ENCODE measurements at regions of chr11 and their contacts with region 1.

Region 1: DNA sequence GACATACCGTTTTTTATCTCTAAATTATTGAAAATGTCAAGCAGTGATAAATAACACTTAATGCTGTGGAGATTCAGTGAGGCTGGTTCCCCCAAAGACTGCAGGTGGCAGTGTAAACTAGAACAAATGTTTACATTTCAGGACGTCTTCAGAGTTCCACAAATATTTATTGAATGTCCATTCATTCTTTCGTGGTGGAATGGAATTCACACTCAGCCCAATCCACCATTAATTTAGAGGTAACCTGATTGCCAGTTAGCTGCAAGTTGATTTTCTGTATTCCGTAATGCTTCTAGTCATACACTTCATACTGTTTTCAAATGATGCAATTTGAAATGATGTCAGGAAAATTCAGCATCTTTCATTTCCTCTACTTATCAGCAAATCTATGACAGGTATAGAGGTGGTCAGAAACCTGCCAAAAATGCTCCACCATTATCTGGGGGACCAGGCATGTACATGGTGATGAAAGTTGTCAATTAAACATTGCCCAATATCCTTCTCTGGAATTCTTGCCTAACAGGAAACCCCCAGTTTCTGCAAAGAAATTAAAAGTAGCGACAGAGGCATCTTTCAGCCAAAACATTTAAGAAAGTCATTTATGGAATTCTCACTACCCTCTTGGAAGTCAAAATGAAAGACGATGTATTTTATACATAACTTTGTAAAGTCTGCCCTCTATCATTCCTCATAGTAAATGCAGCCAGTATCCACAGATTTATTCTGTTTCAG is 94.3 kb upstream of the BMAL1 start:
- DNase-seq: peak; percentile 29
- ATAC-seq: no peak
- H3K4me3 ChIP-seq: no peak overlapping the region
- H3K4me3 Mint-ChIP-seq: no peak overlapping the region
- H3K27ac ChIP-seq: no peak overlapping the region
- H3K27ac Mint-ChIP-seq: no peak overlapping the region
- H3K4me1 ChIP-seq: no peaks in the 10 kb centered on the region
- H3K4me1 Mint-ChIP-seq: no peaks in the 10 kb centered on the region
- H3K27me3 ChIP-seq: no peaks in the 10 kb centered on the region
- H3K27me3 Mint-ChIP-seq: peaks cover 8% of the 10 kb centered on the region
- CTCF ChIP-seq: peak; percentile 48

Region 2: DNA sequence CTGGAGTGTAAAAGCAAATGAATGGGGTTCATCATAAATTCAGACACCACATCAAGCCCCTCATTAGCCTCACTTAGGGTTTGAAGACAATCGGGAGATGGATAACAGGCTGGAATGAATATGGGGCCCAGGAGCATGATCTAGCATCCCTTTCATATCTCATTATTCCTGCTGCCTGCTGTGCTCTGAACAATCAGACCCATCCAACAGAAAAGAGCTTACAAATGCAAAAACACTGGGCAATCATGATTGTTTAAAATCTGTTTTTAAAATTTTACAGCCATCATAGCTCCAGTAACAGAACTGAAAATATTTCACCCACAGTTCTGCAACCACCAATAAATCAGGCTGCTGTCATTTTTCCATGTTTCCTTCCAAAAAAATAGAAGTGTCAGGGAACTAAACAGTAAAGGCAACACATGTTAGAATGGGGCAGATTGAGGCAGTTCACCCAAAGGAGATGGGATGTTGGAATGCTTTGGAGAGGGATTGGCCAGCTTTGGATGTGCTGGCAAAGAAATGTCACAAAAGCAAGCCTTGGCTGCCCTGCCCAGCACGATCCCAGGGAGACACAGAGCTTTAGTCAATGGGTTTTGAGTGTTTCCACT is 46.6 kb after region 1 on chr11:
- CTCF ChIA-PET with region 1: no interaction called
- POLR2A ChIA-PET with region 1: no interaction called
- intact Hi-C with region 1: no loop called
- DNase-seq: no peak
- ATAC-seq: no peak
- H3K4me3 ChIP-seq: no peak overlapping the region
- H3K4me3 Mint-ChIP-seq: peak overlapping the region; percentile 77
- H3K27ac ChIP-seq: no peak overlapping the region
- H3K27ac Mint-ChIP-seq: peak overlapping the region; percentile 52
- H3K4me1 ChIP-seq: peaks cover 26 to 27% of the 10 kb centered on the region in 2 donors
- H3K4me1 Mint-ChIP-seq: peaks cover 24% of the 10 kb centered on the region
- H3K27me3 ChIP-seq: no peaks in the 10 kb centered on the region
- H3K27me3 Mint-ChIP-seq: no peaks in the 10 kb centered on the region
- CTCF ChIP-seq: no peak

Region 3: DNA sequence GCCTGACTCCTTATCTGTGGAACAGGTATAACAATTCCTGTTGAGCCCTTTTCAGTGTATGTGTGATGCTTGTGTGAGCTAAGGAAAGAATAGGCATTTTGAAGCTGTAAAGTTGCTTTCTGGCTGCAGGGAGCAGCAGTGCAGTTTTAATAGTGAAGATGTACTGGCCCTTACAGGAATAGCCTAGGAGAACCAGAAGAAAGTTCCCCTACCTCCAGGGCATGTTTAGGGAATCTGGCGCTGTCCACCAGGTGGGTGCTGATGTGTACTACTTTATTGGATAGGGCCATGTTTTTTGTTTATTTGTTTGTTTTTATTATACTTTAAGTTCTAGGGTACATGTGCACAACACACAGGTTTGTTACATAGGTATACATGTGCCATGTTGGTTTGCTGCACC is 105.8 kb after region 1 on chr11:
- CTCF ChIA-PET with region 1: no interaction called
- POLR2A ChIA-PET with region 1: no interaction called
- intact Hi-C with region 1: no loop called
- DNase-seq: no peak
- ATAC-seq: no peak
- H3K4me3 ChIP-seq: no peak overlapping the region
- H3K4me3 Mint-ChIP-seq: no peak overlapping the region
- H3K27ac ChIP-seq: no peak overlapping the region
- H3K27ac Mint-ChIP-seq: no peak overlapping the region
- H3K4me1 ChIP-seq: no peaks in the 10 kb centered on the region
- H3K4me1 Mint-ChIP-seq: peaks cover 27% of the 10 kb centered on the region
- H3K27me3 ChIP-seq: no peaks in the 10 kb centered on the region
- H3K27me3 Mint-ChIP-seq: no peaks in the 10 kb centered on the region
- CTCF ChIP-seq: no peak

Region 4: DNA sequence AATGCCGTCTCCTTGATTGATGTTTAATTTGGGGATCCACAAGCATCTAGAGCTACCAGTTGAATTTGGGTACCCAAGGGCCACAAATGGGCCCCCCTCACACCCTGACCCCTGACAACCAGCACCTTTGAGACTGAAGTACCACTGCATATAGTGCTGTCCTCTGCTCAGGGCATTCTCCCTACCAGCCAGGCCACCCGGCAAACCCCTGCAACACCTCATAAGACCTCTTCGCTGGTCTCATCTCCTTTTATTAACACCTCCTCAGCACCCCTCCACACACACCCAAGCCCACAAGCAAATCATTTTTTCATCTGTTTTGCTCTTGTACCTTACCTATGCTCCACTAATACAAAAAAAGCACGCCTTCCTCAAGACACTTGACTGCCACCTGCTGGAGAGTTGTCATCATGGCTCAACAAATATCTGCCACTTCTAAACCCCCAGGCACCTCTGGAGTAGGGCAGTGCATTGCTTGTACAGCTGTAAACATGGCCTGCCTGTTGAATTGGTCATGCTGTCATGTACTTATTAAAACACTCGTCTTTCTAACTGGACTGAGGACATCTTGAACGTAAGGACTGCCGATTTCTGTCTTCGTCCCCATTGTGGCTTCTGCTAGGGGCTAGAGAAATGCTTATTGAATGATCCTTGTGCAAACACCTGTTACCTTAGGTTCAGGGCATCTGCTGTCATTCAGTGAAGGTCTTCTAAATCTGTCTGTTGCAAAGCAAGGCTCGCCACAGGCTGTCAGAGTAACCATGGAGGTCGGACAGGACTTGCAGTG is 160.9 kb after region 1 on chr11:
- CTCF ChIA-PET with region 1: interaction called, 7 read pairs
- POLR2A ChIA-PET with region 1: no interaction called
- intact Hi-C with region 1: loop called (anchors 1 kb)
- DNase-seq: peak; percentile 72
- ATAC-seq: peak; percentile 63
- H3K4me3 ChIP-seq: no peak overlapping the region
- H3K4me3 Mint-ChIP-seq: no peak overlapping the region
- H3K27ac ChIP-seq: no peak overlapping the region
- H3K27ac Mint-ChIP-seq: no peak overlapping the region
- H3K4me1 ChIP-seq: peaks cover 7 to 14% of the 10 kb centered on the region in 2 donors
- H3K4me1 Mint-ChIP-seq: peaks cover 49% of the 10 kb centered on the region
- H3K27me3 ChIP-seq: no peaks in the 10 kb centered on the region
- H3K27me3 Mint-ChIP-seq: no peaks in the 10 kb centered on the region
- CTCF ChIP-seq: peak; percentile 89